ENCODE measurements at regions of chr10 and their contacts with region 1.

Region 1: GRCh38 chr10:73495884-73496674 is at the start of gene PPP3CB:
- DNase-seq: no peak
- H3K4me3 Mint-ChIP-seq: peak within 1 kb of the TSS; percentile 95
- H3K27ac Mint-ChIP-seq: peak within 1 kb of the TSS; percentile 98
- H3K4me1 Mint-ChIP-seq: peaks cover 44% of the 10 kb centered on the region
- H3K27me3 Mint-ChIP-seq: no peaks in the 10 kb centered on the region
- total RNA-seq, gene PPP3CB: 45.4 and 46.0 TPM in 2 replicates

Region 2: DNA sequence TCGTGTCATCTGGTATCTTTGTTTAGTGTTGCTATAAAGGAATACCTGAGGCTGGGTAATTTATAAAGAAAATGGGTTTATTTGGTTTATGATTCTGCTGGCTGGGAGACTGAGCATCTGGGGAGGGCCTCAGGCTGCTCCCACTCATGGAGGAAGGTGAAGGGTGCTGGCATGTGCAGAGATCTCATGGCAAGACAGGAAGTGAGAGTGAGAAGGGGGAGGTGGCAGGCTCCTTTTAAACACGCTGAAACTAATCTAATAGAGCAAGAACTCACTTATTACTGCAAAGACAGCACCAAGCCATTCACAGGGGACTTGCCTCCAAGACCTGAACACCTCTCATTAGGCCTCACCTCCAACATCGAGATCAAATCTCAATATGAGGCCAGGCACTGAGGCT is 591.3 kb before region 1 on chr10:
- intact Hi-C with region 1: no loop called
- DNase-seq: no peak
- H3K4me3 Mint-ChIP-seq: no peak overlapping the region
- H3K27ac Mint-ChIP-seq: no peak overlapping the region
- H3K4me1 Mint-ChIP-seq: peaks cover 3% of the 10 kb centered on the region
- H3K27me3 Mint-ChIP-seq: no peaks in the 10 kb centered on the region

Region 3: DNA sequence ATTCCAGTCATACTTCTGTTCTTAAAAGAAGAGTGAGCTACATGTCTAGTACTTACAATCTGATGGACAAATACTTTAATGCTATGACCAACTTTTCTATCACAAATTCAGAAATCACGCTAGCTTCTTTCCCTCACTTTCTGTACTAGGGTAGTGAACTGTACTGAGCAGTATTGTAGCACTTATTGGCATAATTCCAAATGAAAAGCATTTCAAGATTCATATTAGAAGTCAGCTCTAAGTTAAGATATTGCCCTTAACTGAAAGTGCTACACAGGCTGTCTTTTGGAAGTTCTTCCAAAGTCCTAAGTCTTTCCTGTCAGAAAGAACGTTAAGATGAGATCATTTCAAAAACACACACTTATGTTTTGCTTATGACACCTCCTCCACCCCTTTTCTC is 412.9 kb before region 1 on chr10:
- intact Hi-C with region 1: no loop called
- DNase-seq: no peak
- H3K4me3 Mint-ChIP-seq: no peak overlapping the region
- H3K27ac Mint-ChIP-seq: peak overlapping the region; percentile 33
- H3K4me1 Mint-ChIP-seq: peaks cover 27% of the 10 kb centered on the region
- H3K27me3 Mint-ChIP-seq: no peaks in the 10 kb centered on the region

Region 4: GRCh38 chr10:73252445-73253224 is 243.4 kb before region 1 on chr10 and contains the start of gene MRPS16:
- intact Hi-C with region 1: loop called (anchors 2 kb)
- DNase-seq: peak; percentile 92
- H3K4me3 Mint-ChIP-seq: peak within 1 kb of the TSS; percentile 98
- H3K27ac Mint-ChIP-seq: peak within 1 kb of the TSS; percentile 91
- H3K4me1 Mint-ChIP-seq: peaks cover 29% of the 10 kb centered on the region
- H3K27me3 Mint-ChIP-seq: no peaks in the 10 kb centered on the region
- total RNA-seq, gene MRPS16: 145 and 152 TPM in 2 replicates

Region 5: GRCh38 chr10:73413528-73414229 is 82.4 kb before region 1 on chr10 and contains the start of gene ANXA7:
- intact Hi-C with region 1: loop called (anchors 1 kb)
- DNase-seq: peak; percentile 87
- H3K4me3 Mint-ChIP-seq: peak within 1 kb of the TSS; percentile 98
- H3K27ac Mint-ChIP-seq: peak within 1 kb of the TSS; percentile 94
- H3K4me1 Mint-ChIP-seq: peaks cover 43% of the 10 kb centered on the region
- H3K27me3 Mint-ChIP-seq: no peaks in the 10 kb centered on the region
- total RNA-seq, gene ANXA7: 173 and 174 TPM in 2 replicates

Region 6: GRCh38 chr10:73480158-73480557 is 15.9 kb before region 1 on chr10:
- intact Hi-C with region 1: loop called (anchors 1 kb)
- DNase-seq: no peak
- H3K4me3 Mint-ChIP-seq: peak overlapping the region; percentile 39
- H3K27ac Mint-ChIP-seq: peak overlapping the region; percentile 53
- H3K4me1 Mint-ChIP-seq: peaks cover 32% of the 10 kb centered on the region
- H3K27me3 Mint-ChIP-seq: no peaks in the 10 kb centered on the region

Region 7: DNA sequence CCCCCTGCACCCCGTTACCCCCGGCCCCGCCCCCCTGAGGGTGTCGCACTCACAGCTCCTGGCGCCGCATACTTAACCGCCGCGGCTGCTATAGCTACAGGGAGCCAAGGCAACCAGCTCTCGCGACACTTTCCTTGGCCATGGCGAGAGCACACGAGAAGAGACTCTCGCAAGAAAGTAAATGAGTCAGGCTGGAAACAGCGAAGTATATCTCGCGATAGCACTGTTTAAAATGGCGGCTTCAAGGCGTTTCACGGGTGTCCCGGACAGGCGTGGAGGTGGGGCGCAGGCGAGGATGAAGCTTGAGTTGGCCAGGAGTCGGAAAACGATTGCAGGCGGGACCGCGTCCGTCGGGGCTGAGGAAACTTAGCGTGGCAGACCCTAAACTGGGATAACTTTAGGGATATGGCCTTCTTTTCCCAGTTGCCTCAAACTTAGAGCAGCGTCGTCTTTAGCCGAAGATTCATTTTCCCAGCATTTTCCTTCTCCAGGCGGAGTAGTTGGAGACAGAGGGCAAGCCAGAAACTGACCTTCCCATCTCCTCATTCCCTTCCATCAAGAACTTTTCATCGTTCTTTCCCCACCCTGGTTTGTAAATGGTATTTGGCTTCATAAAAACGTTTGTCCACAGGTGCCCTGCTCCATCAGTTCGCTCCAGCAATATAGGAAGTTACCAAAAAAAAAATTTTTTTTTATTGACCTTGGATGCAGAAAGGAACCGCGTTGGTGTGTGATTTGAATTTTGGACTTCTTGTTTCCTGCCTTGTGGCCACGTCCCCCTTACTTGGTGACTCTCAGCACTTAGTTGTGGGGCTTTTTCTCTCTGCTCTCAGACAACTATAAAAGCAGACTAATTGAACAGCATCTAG is 130.0 kb after region 1 on chr10:
- intact Hi-C with region 1: loop called (anchors 1 kb)
- DNase-seq: peak; percentile 91
- H3K4me3 Mint-ChIP-seq: peak overlapping the region; percentile 96
- H3K27ac Mint-ChIP-seq: peak overlapping the region; percentile 96
- H3K4me1 Mint-ChIP-seq: peaks cover 11% of the 10 kb centered on the region
- H3K27me3 Mint-ChIP-seq: no peaks in the 10 kb centered on the region

Region 8: DNA sequence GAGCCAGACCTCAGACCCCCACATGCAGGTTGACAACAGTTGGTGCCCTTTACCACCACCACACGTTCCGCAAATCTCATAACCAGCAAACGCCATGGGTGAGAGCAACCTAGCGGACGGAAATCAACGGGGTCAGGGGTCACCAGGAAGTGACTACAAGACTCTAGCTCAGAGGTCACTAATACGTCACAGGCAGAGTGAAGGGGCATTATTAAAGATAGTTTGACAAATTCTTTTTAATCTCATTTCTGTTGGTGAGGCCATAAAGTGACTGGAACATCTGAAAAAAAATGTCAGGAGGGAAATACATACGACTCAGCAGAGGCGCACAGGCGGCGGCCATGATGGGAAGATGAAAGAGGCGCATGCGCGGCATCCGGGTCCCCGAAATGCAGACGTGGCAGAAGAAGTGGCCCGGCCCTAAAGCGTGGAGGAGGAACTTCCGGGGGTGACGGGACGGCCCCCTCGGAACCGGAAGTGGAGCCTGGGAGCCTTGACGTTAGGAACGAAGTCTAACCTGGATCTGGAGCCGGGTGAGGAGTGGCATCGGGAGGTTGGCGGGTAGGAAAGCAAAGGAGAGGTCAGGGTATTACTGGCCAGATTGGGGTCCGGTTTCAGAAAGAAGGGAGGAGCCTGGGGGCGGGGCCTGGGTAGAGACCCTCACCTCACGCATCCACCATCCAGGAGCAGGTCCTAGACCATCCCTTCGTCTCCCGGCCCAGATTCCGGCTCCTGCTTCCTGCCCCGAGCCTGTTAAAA is 248.0 kb after region 1 on chr10 and contains the start of gene SEC24C:
- intact Hi-C with region 1: loop called (anchors 5 kb)
- DNase-seq: peak; percentile 93
- H3K4me3 Mint-ChIP-seq: peak within 1 kb of the TSS; percentile 97
- H3K27ac Mint-ChIP-seq: peak within 1 kb of the TSS; percentile 100
- H3K4me1 Mint-ChIP-seq: peaks cover 27% of the 10 kb centered on the region
- H3K27me3 Mint-ChIP-seq: no peaks in the 10 kb centered on the region
- total RNA-seq, gene SEC24C: 119 TPM in 2 replicates

Region 9: GRCh38 chr10:73772280-73773151 is 276.4 kb after region 1 on chr10:
- intact Hi-C with region 1: loop called (anchors 10 kb)
- DNase-seq: peak; percentile 84
- H3K4me3 Mint-ChIP-seq: peak overlapping the region; percentile 96
- H3K27ac Mint-ChIP-seq: peak overlapping the region; percentile 90
- H3K4me1 Mint-ChIP-seq: peaks cover 52% of the 10 kb centered on the region
- H3K27me3 Mint-ChIP-seq: no peaks in the 10 kb centered on the region